Calu3 (cell line): ENCODE measurements at regions of chr2 and their contacts with region 1.

Region 1: GRCh38 chr2:105576440-105577252 is 168.1 kb upstream of the NCK2 start:
- DNase-seq: peak; percentile 23
- H3K4me3 Mint-ChIP-seq: peak overlapping the region; percentile 30
- H3K27ac Mint-ChIP-seq: peak overlapping the region; percentile 98
- H3K4me1 Mint-ChIP-seq: peaks cover 48% of the 10 kb centered on the region
- H3K27me3 Mint-ChIP-seq: peaks cover 11% of the 10 kb centered on the region
- CTCF ChIP-seq: peak; percentile 61

Region 2: GRCh38 chr2:105278654-105279053 is 298.0 kb before region 1 on chr2:
- CTCF ChIA-PET with region 1: no interaction called
- intact Hi-C with region 1: no loop called
- DNase-seq: no peak
- H3K4me3 Mint-ChIP-seq: no peak overlapping the region
- H3K27ac Mint-ChIP-seq: no peak overlapping the region
- H3K4me1 Mint-ChIP-seq: no peaks in the 10 kb centered on the region
- H3K27me3 Mint-ChIP-seq: no peaks in the 10 kb centered on the region
- CTCF ChIP-seq: no peak

Region 3: GRCh38 chr2:105595536-105595935 is 18.9 kb after region 1 on chr2:
- CTCF ChIA-PET with region 1: interaction called, 12 read pairs
- intact Hi-C with region 1: no loop called
- DNase-seq: peak; percentile 71
- H3K4me3 Mint-ChIP-seq: no peak overlapping the region
- H3K27ac Mint-ChIP-seq: no peak overlapping the region
- H3K4me1 Mint-ChIP-seq: peaks cover 55% of the 10 kb centered on the region
- H3K27me3 Mint-ChIP-seq: no peaks in the 10 kb centered on the region
- CTCF ChIP-seq: peak; percentile 31

Region 4: DNA sequence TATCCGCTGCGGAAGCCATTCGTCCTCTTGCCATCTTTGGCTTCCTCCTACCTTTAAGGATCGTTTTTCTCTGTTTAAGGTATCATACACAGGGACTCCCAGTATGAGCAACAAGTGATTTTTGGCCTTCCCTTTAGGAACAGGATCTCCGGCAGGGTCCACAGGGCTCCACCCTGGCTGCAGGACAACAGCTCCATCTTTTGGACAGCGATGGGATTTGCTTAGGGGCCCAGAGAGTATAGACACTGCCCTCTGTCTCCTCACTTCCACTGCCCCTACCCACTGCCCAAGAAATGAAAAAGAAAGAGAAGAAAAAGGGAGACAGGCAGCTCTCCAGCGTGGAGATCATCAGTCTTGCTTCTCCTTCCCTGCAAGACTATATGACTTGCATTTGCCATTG is 392.9 kb after region 1 on chr2:
- CTCF ChIA-PET with region 1: interaction called, 3 read pairs
- intact Hi-C with region 1: loop called (anchors 2 kb)
- DNase-seq: peak; percentile 35
- H3K4me3 Mint-ChIP-seq: no peak overlapping the region
- H3K27ac Mint-ChIP-seq: no peak overlapping the region
- H3K4me1 Mint-ChIP-seq: no peaks in the 10 kb centered on the region
- H3K27me3 Mint-ChIP-seq: no peaks in the 10 kb centered on the region
- CTCF ChIP-seq: no peak